CD8-positive, alpha-beta T cell (primary cell): ENCODE measurements at regions of chr5 and their contacts with region 1.

Region 1: GRCh38 chr5:34639852-34640605 is 16.1 kb upstream of the RAI14 start:
- DNase-seq: no peak
- ATAC-seq: no peak
- H3K4me3 ChIP-seq: no peak overlapping the region
- H3K4me3 Mint-ChIP-seq: no peak overlapping the region
- H3K27ac ChIP-seq: no peak overlapping the region
- H3K27ac Mint-ChIP-seq: no peak overlapping the region
- H3K4me1 ChIP-seq: no peaks in the 10 kb centered on the region
- H3K4me1 Mint-ChIP-seq: no peaks in the 10 kb centered on the region
- H3K27me3 ChIP-seq: no peaks in the 10 kb centered on the region
- H3K27me3 Mint-ChIP-seq: peaks cover 3% of the 10 kb centered on the region
- CTCF ChIP-seq: no peak

Region 2: DNA sequence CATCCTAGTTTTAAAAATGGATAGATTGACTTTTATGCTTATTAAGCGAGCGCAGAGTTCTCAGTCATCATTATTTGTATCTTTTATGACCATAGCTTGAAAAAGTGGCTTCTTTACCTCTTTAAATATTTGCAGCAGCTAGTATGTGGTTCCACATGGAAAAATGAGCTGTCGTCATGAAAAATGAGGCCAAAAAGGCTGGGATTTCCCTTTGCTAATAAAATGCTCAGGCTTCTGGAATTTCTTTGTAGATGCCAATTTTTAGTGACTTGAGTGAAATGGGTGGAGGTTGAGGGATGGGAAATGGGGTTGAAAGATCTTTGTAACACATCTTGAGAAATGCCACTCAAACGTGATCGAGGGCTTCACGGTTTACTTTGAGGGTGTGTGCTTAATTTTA is 51.3 kb after region 1 on chr5:
- CTCF ChIA-PET with region 1: no interaction called
- POLR2A ChIA-PET with region 1: no interaction called
- intact Hi-C with region 1: loop called in 1 of 2 experiments (anchors 1 kb)
- DNase-seq: no peak
- ATAC-seq: no peak
- H3K4me3 ChIP-seq: no peak overlapping the region
- H3K4me3 Mint-ChIP-seq: no peak overlapping the region
- H3K27ac ChIP-seq: no peak overlapping the region
- H3K27ac Mint-ChIP-seq: no peak overlapping the region
- H3K4me1 ChIP-seq: peaks cover 3% of the 10 kb centered on the region
- H3K4me1 Mint-ChIP-seq: peaks cover 12% of the 10 kb centered on the region
- H3K27me3 ChIP-seq: no peaks in the 10 kb centered on the region
- H3K27me3 Mint-ChIP-seq: no peaks in the 10 kb centered on the region
- CTCF ChIP-seq: no peak

Region 3: GRCh38 chr5:34891981-34892380 is 252.0 kb after region 1 on chr5:
- CTCF ChIA-PET with region 1: no interaction called
- POLR2A ChIA-PET with region 1: no interaction called
- intact Hi-C with region 1: no loop called
- DNase-seq: no peak
- ATAC-seq: no peak
- H3K4me3 ChIP-seq: no peak overlapping the region
- H3K4me3 Mint-ChIP-seq: no peak overlapping the region
- H3K27ac ChIP-seq: no peak overlapping the region
- H3K27ac Mint-ChIP-seq: no peak overlapping the region
- H3K4me1 ChIP-seq: no peaks in the 10 kb centered on the region
- H3K4me1 Mint-ChIP-seq: no peaks in the 10 kb centered on the region
- H3K27me3 ChIP-seq: no peaks in the 10 kb centered on the region
- H3K27me3 Mint-ChIP-seq: peaks cover 2% of the 10 kb centered on the region
- CTCF ChIP-seq: no peak